ENCODE measurements at regions of chr15 and their contacts with region 1.

Region 1: GRCh38 chr15:101813803-101814534 is 2.0 kb downstream of the OR4F15 start:
- DNase-seq: peak; percentile 88
- ATAC-seq: peak; percentile 92
- H3K4me3 ChIP-seq: no peak overlapping the region
- H3K27ac ChIP-seq: peak overlapping the region; percentile 71; the same call in 1 of the 2 replicates
- H3K4me1 ChIP-seq: no peaks in the 10 kb centered on the region; the same call in 1 of the 2 replicates
- H3K27me3 ChIP-seq: no peaks in the 10 kb centered on the region
- CTCF ChIP-seq: no peak
- POLR2A ChIP-seq: no peak
- RAD21 ChIP-seq: no peak

Region 2: DNA sequence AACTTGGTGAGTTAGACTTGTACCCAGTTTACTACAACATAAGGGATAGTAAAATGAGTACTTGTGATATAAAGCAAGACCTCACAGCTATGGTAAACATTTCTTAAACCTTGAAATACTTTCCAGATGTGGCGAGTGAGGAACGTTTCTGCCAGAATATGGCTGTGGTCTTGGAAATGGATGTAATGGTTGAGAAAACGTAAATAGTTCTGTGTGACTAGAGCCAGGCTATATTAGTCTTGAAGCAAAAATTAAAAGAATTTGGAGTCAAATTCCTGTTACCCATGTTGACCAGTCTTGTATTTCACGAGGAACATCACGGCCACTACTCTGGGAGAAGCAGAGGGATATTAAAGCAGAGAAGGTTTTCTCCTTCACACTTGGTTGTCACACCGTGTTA is 13.3 kb after region 1 on chr15:
- CTCF ChIA-PET with region 1: interaction called, 10 read pairs
- POLR2A ChIA-PET with region 1: no interaction called
- dilution Hi-C with region 1: no loop called
- in situ Hi-C with region 1: no loop called
- intact Hi-C with region 1: loop called (anchors 1 kb)
- DNase-seq: peak; percentile 92
- ATAC-seq: peak; percentile 94
- H3K4me3 ChIP-seq: no peak overlapping the region
- H3K27ac ChIP-seq: no peak overlapping the region; the same call in 1 of the 2 replicates
- H3K4me1 ChIP-seq: no peaks in the 10 kb centered on the region
- H3K27me3 ChIP-seq: no peaks in the 10 kb centered on the region
- CTCF ChIP-seq: no peak
- POLR2A ChIP-seq: no peak
- RAD21 ChIP-seq: no peak